Right cardiac atrium (tissue), 5 donors: ENCODE measurements at regions of chr20 and their contacts with region 1.

Region 1: GRCh38 chr20:49484180-49485140 is 2.0 kb upstream of the KCNB1 start:
- DNase-seq: peak; percentile 86 to 94 (median 92)
- ATAC-seq: peak; percentile 91 to 93
- H3K4me3 ChIP-seq: peak overlapping the region; percentile 58
- H3K27ac ChIP-seq: no peak overlapping the region
- H3K4me1 ChIP-seq: no peaks in the 10 kb centered on the region
- H3K27me3 ChIP-seq: no peaks in the 10 kb centered on the region

Region 2: DNA sequence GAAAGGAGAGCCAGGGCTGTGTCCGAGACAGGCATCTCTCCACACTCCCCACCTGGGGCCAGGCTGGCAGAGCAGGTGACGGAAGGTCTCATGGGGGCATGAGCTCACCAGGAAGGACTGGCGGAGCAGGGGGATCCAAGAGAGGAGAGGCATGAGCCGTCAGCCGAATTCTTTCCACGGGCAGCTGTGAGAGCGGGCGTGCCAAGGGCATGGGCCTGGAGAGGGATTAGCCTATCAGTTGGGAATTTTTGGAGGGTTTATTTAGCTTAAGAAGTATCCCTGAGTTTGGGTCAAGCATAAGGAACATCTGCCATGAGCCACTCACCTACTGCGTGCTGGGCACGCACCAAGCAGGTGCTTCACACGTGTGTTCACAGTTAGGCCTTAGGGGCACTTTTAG is 146.4 kb before region 1 on chr20:
- intact Hi-C with region 1: loop called (anchors 2 to 5 kb)
- DNase-seq: no peak
- ATAC-seq: no peak
- H3K4me3 ChIP-seq: no peak overlapping the region
- H3K27ac ChIP-seq: no peak overlapping the region
- H3K4me1 ChIP-seq: no peaks in the 10 kb centered on the region
- H3K27me3 ChIP-seq: no peaks in the 10 kb centered on the region

Region 3: GRCh38 chr20:49384437-49385088 is 99.9 kb before region 1 on chr20:
- intact Hi-C with region 1: loop called in 1 of 4 experiments (anchors 10 kb)
- DNase-seq: peak; percentile 78 to 89 (median 89)
- ATAC-seq: peak in 1 of 2 donors; percentile 50
- H3K4me3 ChIP-seq: no peak overlapping the region
- H3K27ac ChIP-seq: no peak overlapping the region
- H3K4me1 ChIP-seq: peaks cover 7% of the 10 kb centered on the region
- H3K27me3 ChIP-seq: no peaks in the 10 kb centered on the region

Region 4: GRCh38 chr20:49394264-49394663 is 90.2 kb before region 1 on chr20:
- intact Hi-C with region 1: loop called in 2 of 4 experiments (anchors 5 to 10 kb)
- DNase-seq: peak in 1 of 3 donors; percentile 19
- ATAC-seq: peak; percentile 28 to 39
- H3K4me3 ChIP-seq: no peak overlapping the region
- H3K27ac ChIP-seq: no peak overlapping the region
- H3K4me1 ChIP-seq: peaks cover 4% of the 10 kb centered on the region
- H3K27me3 ChIP-seq: no peaks in the 10 kb centered on the region

Region 5: DNA sequence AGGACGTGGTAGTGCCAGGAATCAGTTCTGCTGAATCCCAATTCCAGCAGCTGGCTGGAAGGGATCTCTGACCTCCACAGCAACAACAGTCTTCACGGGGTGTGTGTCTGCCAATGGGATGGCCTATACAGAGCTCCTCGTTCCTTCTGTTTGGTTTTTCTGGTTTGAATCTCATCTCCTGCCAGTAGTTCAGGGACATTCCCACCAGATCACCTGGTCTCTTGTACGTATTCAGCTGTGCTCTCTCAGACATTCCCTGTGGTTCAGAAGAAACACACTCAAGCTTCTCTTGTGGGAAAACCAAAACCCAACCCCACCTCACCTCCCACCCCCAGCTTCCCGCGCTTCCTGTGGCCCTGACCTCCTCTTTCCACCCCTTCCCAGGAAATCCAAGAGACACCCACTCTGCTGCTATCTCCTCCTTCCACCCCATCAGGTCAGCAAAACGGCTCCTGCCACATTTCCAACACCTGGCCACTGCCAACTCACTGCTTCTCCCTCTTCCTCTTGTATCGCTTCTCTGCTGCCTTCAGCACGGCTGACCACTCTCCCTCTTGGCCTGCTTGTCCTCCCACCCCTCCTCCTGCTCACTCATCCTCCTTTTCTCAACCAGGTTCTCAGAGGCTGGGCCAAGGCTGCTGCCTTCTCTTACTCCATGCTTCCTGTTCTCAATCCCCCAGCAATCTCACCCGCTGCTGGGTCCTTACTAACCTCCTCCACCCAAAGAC is 146.8 kb after region 1 on chr20:
- intact Hi-C with region 1: no loop called
- DNase-seq: peak in 1 of 3 donors; percentile 56
- ATAC-seq: peak; percentile 35 to 45
- H3K4me3 ChIP-seq: no peak overlapping the region
- H3K27ac ChIP-seq: no peak overlapping the region
- H3K4me1 ChIP-seq: peaks cover 2% of the 10 kb centered on the region
- H3K27me3 ChIP-seq: no peaks in the 10 kb centered on the region

Region 6: DNA sequence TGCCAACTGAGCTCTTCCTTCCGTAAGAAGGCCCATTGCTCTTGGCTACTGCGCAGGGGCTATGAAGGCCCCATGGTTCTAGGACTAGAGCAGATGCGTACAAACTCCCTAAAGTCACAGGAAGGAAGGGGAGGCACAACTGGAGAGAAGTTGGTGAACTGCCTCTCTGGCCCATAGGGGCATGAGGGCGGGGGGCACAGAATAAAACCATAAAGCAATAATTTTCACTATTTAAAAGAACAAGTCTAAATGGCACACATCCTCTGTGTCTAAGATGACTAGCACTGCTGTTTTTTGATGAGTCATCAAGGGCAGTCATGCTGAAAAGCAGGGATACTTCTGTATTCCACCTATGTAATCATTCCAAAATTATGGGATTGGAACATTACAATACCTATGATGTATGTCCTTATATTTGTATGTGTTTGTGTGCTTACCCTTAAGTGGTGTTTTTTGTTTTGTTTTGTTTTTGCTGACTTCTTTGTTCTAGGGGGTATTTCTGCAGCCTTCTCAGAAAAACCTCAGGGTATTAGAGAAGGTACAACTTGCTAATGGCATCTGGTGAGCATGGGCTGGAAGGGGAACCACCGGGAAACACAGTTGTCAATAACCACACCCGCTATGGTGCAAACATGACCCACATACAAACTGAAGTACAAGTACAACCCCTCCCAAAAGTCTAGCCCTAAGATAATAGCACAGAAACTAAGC is 192.3 kb after region 1 on chr20:
- intact Hi-C with region 1: no loop called
- DNase-seq: peak in 1 of 3 donors; percentile 45
- ATAC-seq: peak; percentile 51 to 55
- H3K4me3 ChIP-seq: no peak overlapping the region
- H3K27ac ChIP-seq: peak overlapping the region; percentile 70
- H3K4me1 ChIP-seq: peaks cover 23% of the 10 kb centered on the region
- H3K27me3 ChIP-seq: no peaks in the 10 kb centered on the region